Dorsolateral prefrontal cortex (tissue), 120 donors: ENCODE measurements at regions of chr16 and their contacts with region 1.

Region 1: DNA sequence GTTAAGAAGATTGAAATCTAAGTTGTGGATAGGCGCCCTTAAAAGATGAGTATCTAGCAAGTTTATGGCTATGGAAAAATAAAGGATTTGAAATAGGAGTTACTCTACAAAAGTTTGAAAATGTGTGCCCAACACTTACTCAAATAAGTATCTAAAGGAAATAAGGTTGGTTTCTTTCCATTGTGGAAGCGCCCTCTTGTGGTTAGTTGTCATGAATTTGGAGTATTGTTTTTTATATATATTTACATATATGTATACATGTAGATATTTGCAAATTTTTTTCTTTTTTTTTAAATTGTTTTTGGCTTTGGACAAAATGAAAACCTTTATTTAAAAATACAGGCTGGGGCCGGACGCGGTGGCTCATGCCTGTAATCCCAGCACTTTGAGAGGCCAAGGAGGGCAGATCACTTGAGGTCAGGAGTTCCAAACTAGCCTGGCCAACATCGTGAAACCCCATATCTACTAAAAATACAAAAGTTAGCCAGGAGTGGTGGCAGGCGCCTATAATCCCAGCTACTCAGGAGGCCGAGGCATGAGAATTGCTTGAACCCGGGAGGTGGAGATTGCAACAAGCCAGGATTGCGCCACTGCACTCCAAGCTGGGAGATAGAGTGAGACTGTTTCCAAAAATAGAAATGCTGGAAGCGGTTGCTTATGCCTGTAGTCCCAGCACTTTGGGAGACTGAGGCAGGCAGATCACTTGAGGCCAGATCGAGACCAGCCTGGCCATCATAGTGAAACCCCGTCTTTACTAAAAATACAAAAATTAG is 24.0 kb upstream of the VPS4A start:
- DNase-seq: peak in 2 of 10 donors; percentile 19 to 22
- H3K4me3 ChIP-seq: no peak overlapping the region
- H3K27ac ChIP-seq: peak overlapping the region in 1 of 59 donors; percentile 36
- H3K27me3 ChIP-seq: no peaks in the 10 kb centered on the region
- CTCF ChIP-seq: peak; percentile 55 to 86 (median 74)

Region 2: DNA sequence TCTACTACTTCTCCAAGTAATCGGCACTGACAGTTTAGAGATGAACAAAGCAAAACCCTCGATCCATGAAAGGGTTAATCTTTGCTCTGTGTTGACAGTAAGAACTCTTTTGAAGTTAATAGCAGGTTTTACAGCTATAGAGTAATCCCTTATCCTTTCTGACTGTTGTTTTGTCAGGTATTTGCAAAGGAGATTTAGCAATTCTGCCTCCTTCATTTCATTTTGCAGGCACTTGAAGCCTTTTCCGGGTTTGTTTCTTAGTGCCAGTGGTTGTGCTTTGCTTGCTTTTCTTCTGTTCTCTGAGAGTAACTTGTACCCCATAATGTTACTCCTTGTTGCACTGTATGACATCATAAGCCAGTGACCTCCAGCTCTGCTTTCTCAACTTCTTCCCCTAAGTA is 379.3 kb before region 1 on chr16:
- intact Hi-C with region 1: loop called in 1 of 2 experiments (anchors 5 kb)
- DNase-seq: no peak
- H3K4me3 ChIP-seq: no peak overlapping the region
- H3K27ac ChIP-seq: no peak overlapping the region
- H3K27me3 ChIP-seq: no peaks in the 10 kb centered on the region
- CTCF ChIP-seq: no peak

Region 3: DNA sequence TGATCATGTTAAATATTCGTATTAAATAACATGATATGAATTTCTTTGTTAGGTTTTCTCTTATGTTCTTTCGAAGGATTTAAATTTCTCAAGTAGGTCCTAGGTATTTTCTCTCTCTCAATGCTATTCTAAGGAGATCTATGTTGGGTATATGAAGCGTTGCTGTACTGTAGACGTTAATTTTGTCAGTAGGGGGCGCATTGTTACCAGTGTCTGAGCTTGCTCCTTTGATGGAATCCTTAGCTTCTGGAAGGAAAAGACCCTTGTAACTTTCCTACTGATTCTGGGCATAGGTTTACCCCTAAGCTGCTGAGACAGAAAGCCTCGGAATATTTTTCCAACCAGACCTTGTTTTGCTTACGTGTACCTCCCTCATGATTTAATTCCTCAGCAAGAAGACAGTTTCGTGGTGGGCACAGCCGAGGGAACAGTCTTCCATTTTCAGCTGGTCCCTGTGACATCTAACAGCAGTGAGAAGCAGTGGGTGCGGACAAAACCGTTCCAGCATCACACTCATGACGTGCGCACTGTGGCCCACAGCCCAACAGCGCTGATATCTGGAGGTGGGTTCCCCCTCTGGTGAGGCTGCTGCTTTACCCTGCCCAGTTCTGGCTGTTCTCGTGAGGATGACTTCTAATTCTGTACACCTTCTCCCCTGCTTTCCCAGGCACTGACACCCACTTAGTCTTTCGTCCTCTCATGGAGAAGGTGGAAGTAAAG is 136.8 kb before region 1 on chr16:
- intact Hi-C with region 1: loop called (anchors 2 kb)
- DNase-seq: peak; percentile 33 to 86 (median 67)
- H3K4me3 ChIP-seq: peak overlapping the region in 14 of 59 donors; percentile 7 to 40 (median 20)
- H3K27ac ChIP-seq: peak overlapping the region in 51 of 59 donors; percentile 16 to 87 (median 65)
- H3K27me3 ChIP-seq: no peaks in the 10 kb centered on the region
- CTCF ChIP-seq: peak; percentile 60 to 91 (median 80)

Region 4: GRCh38 chr16:69188236-69188549 is 98.9 kb before region 1 on chr16:
- intact Hi-C with region 1: no loop called
- DNase-seq: no peak
- H3K4me3 ChIP-seq: peak overlapping the region; percentile 58 to 90 (median 81)
- H3K27ac ChIP-seq: peak overlapping the region in 41 of 59 donors; percentile 5 to 90 (median 78)
- H3K27me3 ChIP-seq: no peaks in the 10 kb centered on the region
- CTCF ChIP-seq: no peak